ENCODE measurements at regions of chr15 and their contacts with region 1.

Region 1: GRCh38 chr15:74695597-74696397 is at the start of gene EDC3:
- DNase-seq: peak; percentile 88 to 91
- ATAC-seq: peak; percentile 96 to 100 (median 98)
- H3K4me3 ChIP-seq: peak within 1 kb of the TSS; percentile 57 to 89 (median 80)
- H3K27ac ChIP-seq: peak within 1 kb of the TSS; percentile 49 to 87 (median 80)
- H3K4me1 ChIP-seq: peaks cover 0 to 32% (median 17%) of the 10 kb centered on the region in 9 donors
- H3K27me3 ChIP-seq: no peaks in the 10 kb centered on the region
- CTCF ChIP-seq: no peak
- total RNA-seq, gene EDC3: 14.4 to 18.1 (median 15.8) TPM

Region 2: DNA sequence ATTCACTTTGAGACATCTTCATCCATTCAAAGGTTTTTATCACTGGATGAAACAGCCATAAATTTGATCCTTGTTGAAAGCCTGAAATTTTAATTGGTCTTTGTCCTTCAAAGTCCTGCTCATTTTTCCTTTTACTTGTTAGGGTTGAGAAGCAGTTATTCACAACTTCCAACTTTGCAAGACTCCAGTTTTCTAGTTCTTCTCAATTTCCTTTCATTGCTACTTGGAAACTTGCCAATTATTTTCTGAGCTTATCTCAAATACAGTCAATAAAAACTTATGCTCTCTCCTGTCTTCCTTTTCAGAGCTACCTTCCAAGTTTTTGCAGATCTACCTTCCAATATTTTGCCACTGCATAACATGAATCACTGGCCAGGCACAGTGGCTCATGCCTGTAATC is 1035.3 kb before region 1 on chr15:
- intact Hi-C with region 1: no loop called
- DNase-seq: no peak
- ATAC-seq: no peak
- H3K4me3 ChIP-seq: no peak overlapping the region
- H3K27ac ChIP-seq: no peak overlapping the region
- H3K4me1 ChIP-seq: no peaks in the 10 kb centered on the region
- H3K27me3 ChIP-seq: peaks cover 0 to 9% (median 0%) of the 10 kb centered on the region in 7 donors
- CTCF ChIP-seq: no peak

Region 3: GRCh38 chr15:74642729-74643367 is 52.9 kb before region 1 on chr15:
- intact Hi-C with region 1: loop called in 1 of 10 experiments (anchors 10 kb)
- DNase-seq: no peak
- ATAC-seq: peak in 5 of 8 donors; percentile 13 to 46 (median 27)
- H3K4me3 ChIP-seq: no peak overlapping the region
- H3K27ac ChIP-seq: peak overlapping the region in 5 of 10 donors; percentile 1 to 71 (median 23)
- H3K4me1 ChIP-seq: peaks cover 8 to 44% (median 26%) of the 10 kb centered on the region in 9 donors
- H3K27me3 ChIP-seq: no peaks in the 10 kb centered on the region
- CTCF ChIP-seq: no peak